Activated naive CD4-positive, alpha-beta T cell treated with anti-CD3 and anti-CD28 coated beads for 36 hours (primary cell): ENCODE measurements at regions of chr7 and their contacts with region 1.

Region 1: DNA sequence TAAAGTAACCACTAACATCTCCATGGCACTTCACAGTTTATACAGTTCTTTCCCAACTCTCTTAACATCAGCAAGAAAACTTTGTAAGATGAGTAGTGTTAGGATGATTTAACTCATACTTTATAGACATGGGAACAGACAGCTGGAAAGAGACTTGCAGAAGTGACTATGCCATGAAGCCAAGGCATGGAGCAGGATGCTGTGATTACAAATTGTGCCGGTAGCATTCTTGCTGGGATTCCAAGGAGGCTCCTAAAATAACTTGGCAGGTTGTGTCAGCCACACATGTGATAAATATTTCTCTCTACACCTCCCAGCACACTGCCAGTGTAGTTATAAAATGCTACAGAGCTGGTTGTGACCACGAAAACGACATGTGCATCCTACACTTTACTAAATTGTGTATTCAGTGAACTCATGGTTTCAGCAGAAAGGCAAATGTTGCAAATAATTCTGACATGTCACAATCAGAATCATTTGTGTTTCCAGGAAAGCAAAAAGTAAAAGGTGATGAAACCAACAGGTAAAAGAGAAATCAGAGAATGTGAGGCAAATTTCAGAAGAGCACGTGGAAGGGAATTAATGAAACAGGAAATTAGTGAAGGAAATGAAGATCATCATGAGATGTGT is 5.6 kb upstream of the CYP3A4 start:
- DNase-seq: no peak
- H3K4me3 Mint-ChIP-seq: no peak overlapping the region
- H3K27ac Mint-ChIP-seq: peak overlapping the region; percentile 72
- H3K4me1 Mint-ChIP-seq: peaks cover 37% of the 10 kb centered on the region
- H3K27me3 Mint-ChIP-seq: peaks cover 2% of the 10 kb centered on the region

Region 2: GRCh38 chr7:99642027-99642426 is 147.5 kb before region 1 on chr7:
- CTCF ChIA-PET with region 1: no interaction called
- intact Hi-C with region 1: loop called (anchors 1 kb)
- DNase-seq: no peak
- H3K4me3 Mint-ChIP-seq: no peak overlapping the region
- H3K27ac Mint-ChIP-seq: peak overlapping the region; percentile 33
- H3K4me1 Mint-ChIP-seq: peaks cover 44% of the 10 kb centered on the region
- H3K27me3 Mint-ChIP-seq: no peaks in the 10 kb centered on the region

Region 3: DNA sequence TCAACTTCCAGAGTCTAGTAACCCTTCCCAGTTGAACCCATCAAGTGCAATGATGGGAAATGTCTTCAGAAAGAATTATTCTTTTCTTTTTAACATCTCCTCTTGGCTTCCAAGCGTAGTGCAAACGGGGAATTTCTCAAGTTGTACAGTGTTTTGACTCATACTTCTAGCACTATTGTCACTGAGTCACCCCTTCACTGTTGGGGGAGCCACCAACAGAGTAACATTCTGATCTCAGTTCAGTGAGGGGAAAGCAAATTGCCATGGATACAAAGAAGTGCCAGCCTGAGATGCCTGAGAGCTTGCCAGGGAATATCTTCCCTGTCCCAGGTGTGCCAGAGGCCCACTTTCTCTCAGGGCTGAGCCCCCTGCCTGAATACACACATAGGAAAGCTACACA is 140.7 kb before region 1 on chr7:
- CTCF ChIA-PET with region 1: no interaction called
- intact Hi-C with region 1: loop called (anchors 1 kb)
- DNase-seq: peak; percentile 74
- H3K4me3 Mint-ChIP-seq: no peak overlapping the region
- H3K27ac Mint-ChIP-seq: peak overlapping the region; percentile 84
- H3K4me1 Mint-ChIP-seq: peaks cover 18% of the 10 kb centered on the region
- H3K27me3 Mint-ChIP-seq: no peaks in the 10 kb centered on the region

Region 4: DNA sequence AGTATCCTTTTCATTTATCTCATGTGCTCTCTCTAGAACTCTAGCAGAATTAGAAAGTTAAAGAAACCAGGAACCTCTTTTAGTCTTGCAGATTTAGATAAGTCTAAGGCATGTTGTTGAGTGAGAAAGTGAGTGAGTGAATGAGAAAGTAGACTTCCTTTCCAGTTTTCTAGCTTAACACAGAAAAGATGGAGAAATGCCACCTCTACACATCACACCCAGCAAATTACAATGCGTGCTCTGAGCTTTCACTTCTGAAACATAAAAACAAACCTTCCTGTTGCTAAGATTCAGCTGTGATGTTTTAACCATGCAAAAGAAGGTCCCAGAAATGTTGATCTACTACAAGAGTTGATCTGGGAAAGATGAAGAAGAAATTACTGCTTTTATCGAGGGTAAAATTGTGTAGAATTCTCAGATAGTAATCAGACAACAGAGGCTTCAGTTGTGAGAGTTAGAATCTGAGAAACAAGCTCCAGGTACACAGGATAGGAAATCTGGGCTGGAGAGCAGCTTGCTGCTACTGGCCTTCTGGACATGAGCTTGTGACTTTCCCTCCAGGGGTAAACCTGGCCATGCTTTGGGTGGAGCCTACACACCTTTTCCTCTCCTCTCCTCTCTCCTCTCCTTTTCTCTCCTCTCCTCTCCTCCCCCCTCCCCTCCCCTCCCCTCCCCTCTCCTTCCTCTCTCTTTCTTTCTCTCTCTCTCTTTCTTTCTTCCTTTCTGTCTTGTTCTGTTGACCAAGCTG is 114.4 kb before region 1 on chr7:
- CTCF ChIA-PET with region 1: no interaction called
- intact Hi-C with region 1: loop called (anchors 1 kb)
- DNase-seq: peak; percentile 33
- H3K4me3 Mint-ChIP-seq: peak overlapping the region; percentile 30
- H3K27ac Mint-ChIP-seq: peak overlapping the region; percentile 90
- H3K4me1 Mint-ChIP-seq: peaks cover 35% of the 10 kb centered on the region
- H3K27me3 Mint-ChIP-seq: no peaks in the 10 kb centered on the region

Region 5: DNA sequence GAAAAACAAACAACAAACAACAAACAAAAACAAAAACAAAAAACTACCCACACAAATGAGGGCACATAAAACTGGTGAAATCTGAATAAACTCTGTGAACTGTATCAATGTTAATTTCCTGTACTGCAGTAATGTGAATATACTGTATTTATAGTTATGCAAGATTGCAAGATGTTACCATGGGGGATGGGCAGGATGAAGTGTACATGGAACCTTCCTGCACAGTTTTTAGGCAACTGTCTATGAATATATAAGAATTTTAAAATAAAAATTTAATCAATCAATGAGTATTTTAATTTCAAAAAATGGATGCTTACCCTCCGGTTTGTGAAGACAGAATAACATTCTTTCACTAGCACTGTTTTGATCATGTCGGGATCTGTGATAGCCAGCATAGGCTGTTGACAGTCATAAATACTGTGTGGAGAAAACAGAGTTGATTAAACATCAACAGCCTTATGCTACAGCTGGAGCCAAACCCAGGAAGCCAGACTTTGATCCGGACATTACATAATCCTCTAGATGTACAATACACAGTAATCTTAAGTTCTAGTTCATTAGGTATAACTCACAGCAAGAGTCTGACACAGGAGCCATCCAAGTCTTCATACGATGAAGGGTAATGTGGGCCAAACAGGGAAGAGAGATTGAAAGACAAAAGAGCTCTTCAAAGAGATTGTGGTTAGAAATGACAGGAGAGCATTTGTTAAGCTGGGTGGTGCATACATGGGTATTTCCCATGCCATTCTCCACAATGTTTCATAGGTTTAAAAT is 69.4 kb before region 1 on chr7:
- CTCF ChIA-PET with region 1: no interaction called
- intact Hi-C with region 1: loop called (anchors 2 kb)
- DNase-seq: no peak
- H3K4me3 Mint-ChIP-seq: no peak overlapping the region
- H3K27ac Mint-ChIP-seq: no peak overlapping the region
- H3K4me1 Mint-ChIP-seq: peaks cover 19% of the 10 kb centered on the region
- H3K27me3 Mint-ChIP-seq: no peaks in the 10 kb centered on the region

Region 6: DNA sequence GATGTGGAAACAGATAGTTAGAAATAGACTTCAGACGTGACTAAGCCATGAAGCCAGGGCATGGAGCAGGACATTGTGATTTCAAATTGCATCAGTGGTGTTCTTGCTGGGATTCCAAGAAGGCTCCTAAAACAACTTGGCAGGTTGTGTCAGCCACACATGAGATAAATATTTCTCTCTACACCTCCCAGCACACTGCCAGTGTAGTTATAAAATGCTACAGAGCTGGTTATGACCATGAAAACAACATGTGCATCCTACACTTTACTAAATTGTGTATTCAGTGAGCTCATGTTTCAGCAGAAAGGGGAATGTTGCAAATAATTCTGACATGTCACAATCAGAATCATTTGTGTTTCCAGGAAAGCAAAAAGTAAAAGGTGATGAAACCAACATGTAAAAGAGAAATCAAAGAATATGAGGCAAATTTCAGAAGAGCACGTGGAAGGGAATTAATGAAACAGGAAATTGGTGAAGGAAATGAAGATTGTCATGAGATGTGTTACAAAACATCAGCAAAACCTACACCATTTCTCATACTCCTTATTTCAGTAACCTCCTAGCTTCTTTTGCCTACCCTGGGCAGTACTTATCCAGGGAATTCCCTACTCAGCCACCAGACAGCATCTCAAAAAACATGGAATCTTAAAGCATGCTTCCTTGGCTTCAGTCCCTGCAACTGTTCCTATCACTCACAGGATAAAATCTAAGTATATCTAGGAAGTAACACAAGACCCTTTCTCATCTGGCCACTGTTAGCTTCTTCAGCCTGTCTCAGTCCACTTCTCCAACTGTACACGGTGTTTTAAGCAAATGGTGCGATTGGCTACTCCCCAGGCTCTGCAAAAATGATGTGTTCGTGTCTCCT is 48.7 kb before region 1 on chr7:
- CTCF ChIA-PET with region 1: no interaction called
- intact Hi-C with region 1: loop called (anchors 2 kb)
- DNase-seq: no peak
- H3K4me3 Mint-ChIP-seq: no peak overlapping the region
- H3K27ac Mint-ChIP-seq: peak overlapping the region; percentile 22
- H3K4me1 Mint-ChIP-seq: peaks cover 15% of the 10 kb centered on the region
- H3K27me3 Mint-ChIP-seq: peaks cover 4% of the 10 kb centered on the region

Region 7: GRCh38 chr7:99755085-99755484 is 34.5 kb before region 1 on chr7:
- CTCF ChIA-PET with region 1: no interaction called
- intact Hi-C with region 1: no loop called
- DNase-seq: no peak
- H3K4me3 Mint-ChIP-seq: no peak overlapping the region
- H3K27ac Mint-ChIP-seq: no peak overlapping the region
- H3K4me1 Mint-ChIP-seq: peaks cover 1% of the 10 kb centered on the region
- H3K27me3 Mint-ChIP-seq: no peaks in the 10 kb centered on the region

Region 8: DNA sequence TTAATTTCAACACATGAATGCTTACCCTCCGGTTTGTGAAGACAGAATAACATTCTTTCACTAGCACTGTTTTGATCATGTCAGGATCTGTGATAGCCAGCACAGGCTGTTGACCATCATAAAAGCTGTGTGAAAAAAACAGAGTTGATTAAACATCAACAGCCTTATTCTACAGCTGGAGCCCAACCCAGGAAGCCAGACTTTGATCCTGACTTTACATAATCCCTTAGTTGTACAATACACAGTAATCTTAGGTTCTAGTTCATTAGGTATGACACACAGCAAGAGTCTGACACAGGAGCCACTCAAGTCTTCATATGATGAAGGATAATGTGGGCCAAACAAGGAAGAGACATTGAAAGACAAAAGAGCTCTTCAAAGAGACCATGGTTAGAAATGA is 17.0 kb before region 1 on chr7:
- CTCF ChIA-PET with region 1: no interaction called
- intact Hi-C with region 1: loop called (anchors 1 kb)
- DNase-seq: no peak
- H3K4me3 Mint-ChIP-seq: no peak overlapping the region
- H3K27ac Mint-ChIP-seq: no peak overlapping the region
- H3K4me1 Mint-ChIP-seq: peaks cover 10% of the 10 kb centered on the region
- H3K27me3 Mint-ChIP-seq: peaks cover 70% of the 10 kb centered on the region

Region 9: GRCh38 chr7:99820408-99821027 is 31.0 kb after region 1 on chr7:
- CTCF ChIA-PET with region 1: no interaction called
- intact Hi-C with region 1: no loop called
- DNase-seq: no peak
- H3K4me3 Mint-ChIP-seq: no peak overlapping the region
- H3K27ac Mint-ChIP-seq: no peak overlapping the region
- H3K4me1 Mint-ChIP-seq: no peaks in the 10 kb centered on the region
- H3K27me3 Mint-ChIP-seq: peaks cover 6% of the 10 kb centered on the region